ENCODE measurements at regions of chr10 and their contacts with region 1.

Region 1: DNA sequence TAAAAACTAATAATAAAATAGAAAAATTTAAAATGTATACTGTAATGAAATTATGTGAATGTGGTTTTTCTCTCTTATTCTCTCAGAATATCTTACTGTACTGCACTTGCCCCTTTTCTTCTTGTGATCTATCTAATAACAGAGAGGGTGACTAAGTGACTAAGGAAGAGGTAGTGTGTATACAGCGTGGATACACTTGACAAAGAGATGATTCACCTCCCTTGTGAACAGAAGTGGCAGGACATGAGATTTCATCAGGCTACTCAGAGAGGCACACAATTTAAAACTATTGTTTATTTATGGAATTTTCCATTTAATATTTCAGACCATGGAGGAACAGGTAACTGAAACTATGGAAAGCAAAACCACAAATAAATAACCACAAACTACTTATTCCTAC is 806.6 kb upstream of the GHITM start:
- DNase-seq: no peak
- H3K4me3 ChIP-seq: no peak overlapping the region
- H3K27ac ChIP-seq: no peak overlapping the region
- H3K4me1 ChIP-seq: no peaks in the 10 kb centered on the region
- H3K27me3 ChIP-seq: no peaks in the 10 kb centered on the region
- CTCF ChIP-seq: no peak
- EP300 ChIP-seq: no peak
- POLR2A ChIP-seq: no peak

Region 2: DNA sequence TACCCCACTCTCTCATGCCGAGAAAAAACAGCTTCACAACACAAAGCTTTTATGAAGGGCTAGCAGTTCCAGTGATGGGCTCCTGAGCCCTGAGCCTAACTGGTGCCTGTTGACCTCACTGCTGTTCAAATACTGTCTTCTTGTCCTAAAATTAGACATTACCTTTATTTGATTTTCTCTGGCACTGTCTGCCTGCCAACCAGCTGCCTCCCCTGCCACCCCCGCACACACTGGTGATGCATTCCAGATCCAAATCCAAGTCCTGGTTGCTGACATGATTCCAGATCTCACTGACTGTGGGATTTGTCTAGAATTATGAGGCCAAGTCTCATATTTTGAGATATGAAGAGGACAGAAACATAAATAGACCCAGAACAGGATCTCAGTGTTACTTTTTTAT is 641.5 kb before region 1 on chr10:
- in situ Hi-C with region 1: no loop called
- intact Hi-C with region 1: no loop called
- DNase-seq: no peak
- H3K4me3 ChIP-seq: no peak overlapping the region
- H3K27ac ChIP-seq: no peak overlapping the region
- H3K4me1 ChIP-seq: no peaks in the 10 kb centered on the region
- H3K27me3 ChIP-seq: no peaks in the 10 kb centered on the region
- CTCF ChIP-seq: no peak
- EP300 ChIP-seq: no peak
- POLR2A ChIP-seq: no peak

Region 3: GRCh38 chr10:83276971-83277370 is 55.7 kb before region 1 on chr10:
- in situ Hi-C with region 1: no loop called
- intact Hi-C with region 1: loop called (anchors 2 kb)
- DNase-seq: no peak
- H3K4me3 ChIP-seq: no peak overlapping the region
- H3K27ac ChIP-seq: no peak overlapping the region
- H3K4me1 ChIP-seq: no peaks in the 10 kb centered on the region
- H3K27me3 ChIP-seq: no peaks in the 10 kb centered on the region
- CTCF ChIP-seq: no peak
- EP300 ChIP-seq: no peak
- POLR2A ChIP-seq: no peak

Measured in transverse colon (tissue), 4 donors.